Activated T-helper 2 cell treated with anti-CD3 and anti-CD28 coated beads, Interferon-gamma antibody, Interleukin-2, Interleukin-4, amounts not matched to agents 10 μg/mL and 5 μg/mL and 100 μg/mL, durations not matched to agents 14 hours and 24 hours and 36 hours (primary cell): ENCODE measurements at regions of chr10 and their contacts with region 1.

Region 1: GRCh38 chr10:6498771-6499170 is 81.3 kb downstream of the PRKCQ start:
- DNase-seq: peak; percentile 48
- H3K4me3 Mint-ChIP-seq: peak overlapping the region; percentile 65
- H3K27ac Mint-ChIP-seq: peak overlapping the region; percentile 87
- H3K4me1 Mint-ChIP-seq: peaks cover 27% of the 10 kb centered on the region
- H3K27me3 Mint-ChIP-seq: no peaks in the 10 kb centered on the region

Region 2: DNA sequence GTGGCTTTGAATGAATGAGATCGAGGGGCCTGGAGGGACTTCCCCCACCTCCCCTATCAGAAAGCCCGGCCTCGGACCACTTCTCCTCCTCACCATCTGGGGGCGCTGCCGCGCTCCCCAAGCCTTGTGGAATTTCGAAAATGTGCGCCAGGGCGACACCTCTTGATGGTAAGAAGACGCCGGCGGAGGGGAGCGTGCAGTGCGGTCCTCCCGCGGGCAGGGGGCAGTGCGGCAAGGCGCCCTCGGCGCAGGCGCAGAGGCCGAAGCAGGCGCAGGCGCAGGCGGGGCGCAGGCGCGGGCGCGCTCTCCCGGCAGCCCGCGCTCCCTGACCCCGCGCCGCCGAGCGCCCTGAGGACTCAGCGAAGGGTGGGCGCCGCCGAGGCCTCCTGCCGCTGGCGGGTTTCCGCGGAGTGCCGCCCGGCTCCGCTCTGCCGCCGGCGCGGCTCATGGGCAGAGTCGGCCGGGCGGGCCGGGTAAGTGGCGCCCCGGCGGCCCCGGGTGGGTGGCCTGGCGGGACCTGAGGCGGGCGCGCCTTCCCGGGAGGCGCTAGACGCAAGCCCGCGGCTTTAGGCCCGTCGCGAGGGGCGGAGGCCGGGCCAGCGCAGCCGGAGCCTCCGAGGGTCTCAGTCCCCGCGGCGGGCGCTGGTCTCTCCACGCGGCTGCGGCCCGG is 409.9 kb before region 1 on chr10 and contains the start of gene RBM17:
- intact Hi-C with region 1: loop called (anchors 10 kb)
- DNase-seq: peak; percentile 98
- H3K4me3 Mint-ChIP-seq: peak within 1 kb of the TSS; percentile 98
- H3K27ac Mint-ChIP-seq: peak within 1 kb of the TSS; percentile 80
- H3K4me1 Mint-ChIP-seq: peaks cover 63% of the 10 kb centered on the region
- H3K27me3 Mint-ChIP-seq: no peaks in the 10 kb centered on the region
- total RNA-seq, gene RBM17: 257 and 266 TPM in 2 replicates

Region 3: DNA sequence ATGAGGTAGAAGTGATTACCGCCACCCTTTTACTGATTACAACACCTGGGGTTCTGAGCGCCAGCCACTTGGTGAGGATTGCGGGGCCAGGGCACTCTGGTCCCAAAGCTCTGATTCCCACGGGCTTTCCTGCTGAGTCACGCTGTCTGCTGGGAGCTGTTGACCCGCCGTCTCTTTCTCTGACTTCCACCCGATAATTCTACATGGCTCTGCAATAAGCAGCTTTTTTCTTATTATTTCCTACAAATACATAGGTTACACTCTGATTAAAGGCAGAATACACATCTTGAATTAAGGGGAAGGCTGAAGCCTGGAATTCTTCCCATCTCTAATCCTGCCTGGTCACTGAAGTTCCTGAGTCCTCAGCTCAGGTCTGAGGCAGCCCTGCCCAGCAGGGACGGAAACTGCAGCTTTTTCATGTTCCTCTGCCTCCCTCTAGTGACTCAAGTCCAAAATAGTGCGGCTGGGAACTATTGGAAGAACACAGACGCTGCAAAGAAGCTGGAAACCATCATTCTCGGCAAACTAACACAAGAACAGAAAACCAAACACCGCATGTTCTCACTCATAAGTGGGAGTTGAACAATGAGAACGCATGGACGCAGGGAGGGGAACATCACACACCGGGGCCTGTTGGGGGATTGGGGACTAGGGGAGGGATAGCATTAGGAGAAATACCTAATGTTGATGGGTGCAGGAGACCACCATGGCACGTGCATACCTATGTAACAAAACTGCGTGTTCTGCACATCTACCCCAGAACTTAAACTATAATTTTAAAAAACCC is 97.0 kb before region 1 on chr10:
- intact Hi-C with region 1: loop called (anchors 5 kb)
- DNase-seq: peak; percentile 47
- H3K4me3 Mint-ChIP-seq: no peak overlapping the region
- H3K27ac Mint-ChIP-seq: no peak overlapping the region
- H3K4me1 Mint-ChIP-seq: peaks cover 37% of the 10 kb centered on the region
- H3K27me3 Mint-ChIP-seq: peaks cover 11% of the 10 kb centered on the region

Region 4: GRCh38 chr10:6513476-6513875 is 14.7 kb after region 1 on chr10:
- intact Hi-C with region 1: loop called (anchors 2 kb)
- DNase-seq: no peak
- H3K4me3 Mint-ChIP-seq: peak overlapping the region; percentile 34
- H3K27ac Mint-ChIP-seq: peak overlapping the region; percentile 77
- H3K4me1 Mint-ChIP-seq: peaks cover 60% of the 10 kb centered on the region
- H3K27me3 Mint-ChIP-seq: no peaks in the 10 kb centered on the region

Region 5: GRCh38 chr10:6563075-6563474 is 64.3 kb after region 1 on chr10:
- intact Hi-C with region 1: loop called (anchors 2 kb)
- DNase-seq: peak; percentile 44
- H3K4me3 Mint-ChIP-seq: peak overlapping the region; percentile 66
- H3K27ac Mint-ChIP-seq: peak overlapping the region; percentile 80
- H3K4me1 Mint-ChIP-seq: peaks cover 72% of the 10 kb centered on the region
- H3K27me3 Mint-ChIP-seq: no peaks in the 10 kb centered on the region